ENCODE measurements at regions of chr2 and their contacts with region 1.

Region 1: DNA sequence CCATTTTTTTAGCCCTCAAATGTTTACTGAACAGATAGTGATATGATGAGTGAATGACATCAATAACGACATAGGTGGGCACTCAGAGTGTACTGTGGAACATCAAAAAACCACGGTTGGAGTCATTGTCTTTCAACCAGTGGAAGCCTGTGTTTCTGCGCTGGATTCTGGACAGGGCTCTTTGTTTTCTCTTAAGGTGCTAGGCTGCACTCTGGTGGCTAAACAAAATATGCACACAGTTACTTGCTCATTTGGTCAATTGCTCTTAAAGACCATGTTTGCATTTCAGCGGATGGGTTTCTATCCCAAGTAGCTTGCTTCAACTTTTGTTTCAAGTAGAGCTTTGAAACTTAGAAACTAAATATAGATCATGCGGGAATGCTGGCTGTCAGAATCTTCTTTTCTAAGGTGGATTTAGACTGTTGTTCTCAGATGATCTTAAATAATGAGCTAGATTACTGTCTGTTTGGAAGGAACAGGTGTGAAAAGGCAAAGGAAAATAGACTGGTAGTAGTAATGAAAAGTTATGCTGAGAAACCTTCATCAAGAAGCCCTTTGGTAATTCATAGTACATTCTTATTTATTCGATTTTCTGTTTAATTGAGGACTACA is 48.5 kb upstream of the LYPD6B start:
- DNase-seq: no peak
- ATAC-seq: peak; percentile 59 to 91 (median 78)
- H3K4me3 ChIP-seq: no peak overlapping the region
- H3K27ac ChIP-seq: no peak overlapping the region
- H3K4me1 ChIP-seq: no peaks in the 10 kb centered on the region
- H3K27me3 ChIP-seq: no peaks in the 10 kb centered on the region
- CTCF ChIP-seq: peak; percentile 69

Region 2: GRCh38 chr2:147937744-147938349 is 1052.1 kb before region 1 on chr2:
- intact Hi-C with region 1: loop called (anchors 5 kb)
- DNase-seq: no peak
- ATAC-seq: peak in 3 of 4 donors; percentile 52 to 88 (median 75)
- H3K4me3 ChIP-seq: no peak overlapping the region
- H3K27ac ChIP-seq: no peak overlapping the region
- H3K4me1 ChIP-seq: no peaks in the 10 kb centered on the region
- H3K27me3 ChIP-seq: no peaks in the 10 kb centered on the region
- CTCF ChIP-seq: peak; percentile 85

Region 3: GRCh38 chr2:147989809-147990403 is 1000.1 kb before region 1 on chr2:
- intact Hi-C with region 1: loop called in 1 of 2 experiments (anchors 10 kb)
- DNase-seq: no peak
- ATAC-seq: peak in 2 of 4 donors; percentile 32 to 71
- H3K4me3 ChIP-seq: no peak overlapping the region
- H3K27ac ChIP-seq: no peak overlapping the region
- H3K4me1 ChIP-seq: peaks cover 11% of the 10 kb centered on the region
- H3K27me3 ChIP-seq: no peaks in the 10 kb centered on the region
- CTCF ChIP-seq: peak; percentile 64

Region 4: GRCh38 chr2:148565272-148565894 is 424.6 kb before region 1 on chr2:
- intact Hi-C with region 1: loop called (anchors 5 kb)
- DNase-seq: no peak
- ATAC-seq: no peak
- H3K4me3 ChIP-seq: no peak overlapping the region
- H3K27ac ChIP-seq: no peak overlapping the region
- H3K4me1 ChIP-seq: no peaks in the 10 kb centered on the region
- H3K27me3 ChIP-seq: peaks cover 0 to 2% (median 0%) of the 10 kb centered on the region in 3 donors
- CTCF ChIP-seq: peak; percentile 30

Region 5: GRCh38 chr2:148570989-148571388 is 419.0 kb before region 1 on chr2:
- intact Hi-C with region 1: loop called (anchors 5 kb)
- DNase-seq: no peak
- ATAC-seq: no peak
- H3K4me3 ChIP-seq: no peak overlapping the region
- H3K27ac ChIP-seq: no peak overlapping the region
- H3K4me1 ChIP-seq: no peaks in the 10 kb centered on the region
- H3K27me3 ChIP-seq: peaks cover 0 to 2% (median 0%) of the 10 kb centered on the region in 3 donors
- CTCF ChIP-seq: no peak

Region 6: GRCh38 chr2:148603562-148603920 is 386.4 kb before region 1 on chr2:
- intact Hi-C with region 1: no loop called
- DNase-seq: no peak
- ATAC-seq: no peak
- H3K4me3 ChIP-seq: no peak overlapping the region
- H3K27ac ChIP-seq: no peak overlapping the region
- H3K4me1 ChIP-seq: no peaks in the 10 kb centered on the region
- H3K27me3 ChIP-seq: peaks cover 0 to 2% (median 0%) of the 10 kb centered on the region in 3 donors
- CTCF ChIP-seq: no peak

Region 7: GRCh38 chr2:148634749-148635148 is 355.2 kb before region 1 on chr2:
- intact Hi-C with region 1: loop called in 1 of 2 experiments (anchors 10 kb)
- DNase-seq: no peak
- ATAC-seq: no peak
- H3K4me3 ChIP-seq: no peak overlapping the region
- H3K27ac ChIP-seq: no peak overlapping the region
- H3K4me1 ChIP-seq: no peaks in the 10 kb centered on the region
- H3K27me3 ChIP-seq: no peaks in the 10 kb centered on the region
- CTCF ChIP-seq: no peak

Region 8: DNA sequence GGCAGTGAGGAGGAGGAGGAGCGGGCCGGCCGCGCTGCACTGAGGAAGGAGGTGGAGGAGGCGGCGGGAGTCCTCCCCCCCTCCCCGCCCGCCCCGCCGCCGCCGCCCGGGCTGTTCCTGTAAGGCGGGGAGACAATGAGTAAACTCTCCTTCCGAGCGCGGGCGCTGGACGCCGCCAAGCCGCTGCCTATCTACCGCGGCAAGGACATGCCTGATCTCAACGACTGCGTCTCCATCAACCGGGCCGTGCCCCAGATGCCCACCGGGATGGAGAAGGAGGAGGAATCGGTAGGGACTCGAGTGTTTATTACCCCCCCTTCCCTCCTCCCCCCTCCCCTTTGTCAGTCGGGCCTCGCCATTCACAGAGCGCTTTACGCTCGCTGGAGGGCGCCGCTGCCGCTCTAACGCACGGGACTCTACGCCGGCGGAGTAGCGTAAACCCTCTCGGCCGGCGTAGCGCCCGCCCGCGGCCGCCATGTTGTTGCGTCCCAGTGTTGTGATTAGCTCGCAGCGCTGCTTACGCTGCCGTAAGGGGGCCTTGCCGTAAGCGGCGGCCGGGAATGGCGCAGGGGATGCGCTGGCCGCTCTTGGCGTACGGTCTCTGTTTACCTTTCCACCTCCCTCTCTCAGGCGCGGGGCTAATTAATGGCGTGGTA is 345.0 kb before region 1 on chr2:
- intact Hi-C with region 1: loop called in 1 of 2 experiments (anchors 5 kb)
- DNase-seq: peak; percentile 94 to 97
- ATAC-seq: peak; percentile 86 to 90 (median 90)
- H3K4me3 ChIP-seq: peak overlapping the region; percentile 82
- H3K27ac ChIP-seq: peak overlapping the region; percentile 97
- H3K4me1 ChIP-seq: peaks cover 27% of the 10 kb centered on the region
- H3K27me3 ChIP-seq: no peaks in the 10 kb centered on the region
- CTCF ChIP-seq: peak; percentile 41